ENCODE measurements at regions of chr14 and their contacts with region 1.

Region 1: DNA sequence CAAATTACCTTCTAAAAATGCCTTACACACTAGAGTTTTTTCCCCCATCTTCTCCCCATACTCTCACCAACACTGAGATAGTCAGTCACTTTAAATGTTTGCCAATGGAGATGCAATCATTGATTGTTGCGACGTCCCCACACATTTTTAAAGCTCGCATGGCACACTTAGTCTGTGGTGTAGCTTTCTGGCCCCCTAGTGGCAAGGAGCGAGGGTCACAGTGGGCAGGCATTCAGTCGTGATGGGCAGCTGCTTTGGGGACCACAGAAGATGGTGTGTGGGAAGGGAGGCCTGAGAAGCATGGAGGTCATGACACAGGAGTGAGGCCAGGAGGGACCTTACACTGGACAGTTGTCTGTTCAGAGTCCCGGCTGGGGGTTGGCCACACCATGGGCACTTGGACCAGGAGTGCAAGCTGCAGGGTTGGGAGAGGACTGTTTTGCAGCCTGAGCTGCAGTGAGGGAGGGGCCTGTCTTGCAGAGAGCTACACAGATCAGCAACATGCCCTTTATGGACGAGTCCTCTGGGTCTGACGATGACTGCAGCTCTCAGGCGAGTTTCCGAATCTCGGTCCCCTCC is 28.7 kb downstream of the PIGH start:
- DNase-seq: peak; percentile 55 to 67
- ATAC-seq: peak; percentile 92 to 98
- H3K4me3 ChIP-seq: no peak overlapping the region
- H3K27ac ChIP-seq: no peak overlapping the region
- H3K4me1 ChIP-seq: no peaks in the 10 kb centered on the region
- CTCF ChIP-seq: peak; percentile 80
- EP300 ChIP-seq: no peak
- POLR2A ChIP-seq: no peak
- RAD21 ChIP-seq: peak; percentile 74 to 86

Region 2: GRCh38 chr14:67446120-67447032 is 125.0 kb before region 1 on chr14:
- CTCF ChIA-PET with region 1: interaction called, 11 read pairs
- POLR2A ChIA-PET with region 1: no interaction called
- DNase-seq: no peak
- ATAC-seq: no peak
- H3K4me3 ChIP-seq: no peak overlapping the region
- H3K27ac ChIP-seq: no peak overlapping the region
- H3K4me1 ChIP-seq: no peaks in the 10 kb centered on the region
- CTCF ChIP-seq: no peak
- EP300 ChIP-seq: no peak
- POLR2A ChIP-seq: no peak
- RAD21 ChIP-seq: no peak

Region 3: GRCh38 chr14:67526676-67527459 is 44.5 kb before region 1 on chr14:
- CTCF ChIA-PET with region 1: interaction called, 100 read pairs
- POLR2A ChIA-PET with region 1: interaction called, 6 read pairs
- DNase-seq: peak; percentile 54 to 71
- ATAC-seq: peak; percentile 91 to 96
- H3K4me3 ChIP-seq: no peak overlapping the region
- H3K27ac ChIP-seq: no peak overlapping the region
- H3K4me1 ChIP-seq: no peaks in the 10 kb centered on the region
- CTCF ChIP-seq: peak; percentile 95
- EP300 ChIP-seq: no peak
- POLR2A ChIP-seq: no peak
- RAD21 ChIP-seq: peak; percentile 79 to 84

Region 4: GRCh38 chr14:67541448-67542387 is 29.6 kb before region 1 on chr14:
- CTCF ChIA-PET with region 1: interaction called, 68 read pairs
- POLR2A ChIA-PET with region 1: no interaction called
- DNase-seq: no peak
- ATAC-seq: no peak
- H3K4me3 ChIP-seq: no peak overlapping the region
- H3K27ac ChIP-seq: no peak overlapping the region
- H3K4me1 ChIP-seq: no peaks in the 10 kb centered on the region
- CTCF ChIP-seq: no peak
- EP300 ChIP-seq: no peak
- POLR2A ChIP-seq: no peak
- RAD21 ChIP-seq: no peak

Region 5: DNA sequence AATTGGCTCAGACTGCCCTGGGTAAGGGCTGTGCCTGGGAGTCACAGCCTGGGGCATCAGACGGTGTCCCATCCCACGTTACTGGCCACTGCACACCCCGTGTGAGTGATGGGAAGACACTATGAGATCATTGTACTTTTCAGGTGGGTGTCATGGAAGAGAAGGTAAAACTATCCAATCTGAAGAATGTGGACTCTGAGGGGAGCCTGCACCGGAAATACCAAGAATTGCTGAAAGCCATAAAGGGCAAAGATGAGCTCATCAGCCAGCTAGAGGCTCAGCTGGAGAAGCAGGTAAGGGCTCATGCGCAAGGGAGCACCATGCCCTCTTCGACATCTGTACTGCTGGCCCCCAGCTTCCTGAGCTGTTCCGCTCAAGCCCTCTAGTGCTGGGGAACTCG is 14.2 kb before region 1 on chr14:
- CTCF ChIA-PET with region 1: interaction called, 97 read pairs
- POLR2A ChIA-PET with region 1: no interaction called
- DNase-seq: peak in 1 of 2 experiments; percentile 11
- ATAC-seq: peak; percentile 39 to 57; a peak in 4 of 6 replicates
- H3K4me3 ChIP-seq: no peak overlapping the region
- H3K27ac ChIP-seq: no peak overlapping the region; a peak in 1 of 6 replicates
- H3K4me1 ChIP-seq: peaks cover 9% of the 10 kb centered on the region; the same call in 1 of the 3 replicates
- CTCF ChIP-seq: no peak
- EP300 ChIP-seq: no peak
- POLR2A ChIP-seq: no peak
- RAD21 ChIP-seq: no peak

Region 6: DNA sequence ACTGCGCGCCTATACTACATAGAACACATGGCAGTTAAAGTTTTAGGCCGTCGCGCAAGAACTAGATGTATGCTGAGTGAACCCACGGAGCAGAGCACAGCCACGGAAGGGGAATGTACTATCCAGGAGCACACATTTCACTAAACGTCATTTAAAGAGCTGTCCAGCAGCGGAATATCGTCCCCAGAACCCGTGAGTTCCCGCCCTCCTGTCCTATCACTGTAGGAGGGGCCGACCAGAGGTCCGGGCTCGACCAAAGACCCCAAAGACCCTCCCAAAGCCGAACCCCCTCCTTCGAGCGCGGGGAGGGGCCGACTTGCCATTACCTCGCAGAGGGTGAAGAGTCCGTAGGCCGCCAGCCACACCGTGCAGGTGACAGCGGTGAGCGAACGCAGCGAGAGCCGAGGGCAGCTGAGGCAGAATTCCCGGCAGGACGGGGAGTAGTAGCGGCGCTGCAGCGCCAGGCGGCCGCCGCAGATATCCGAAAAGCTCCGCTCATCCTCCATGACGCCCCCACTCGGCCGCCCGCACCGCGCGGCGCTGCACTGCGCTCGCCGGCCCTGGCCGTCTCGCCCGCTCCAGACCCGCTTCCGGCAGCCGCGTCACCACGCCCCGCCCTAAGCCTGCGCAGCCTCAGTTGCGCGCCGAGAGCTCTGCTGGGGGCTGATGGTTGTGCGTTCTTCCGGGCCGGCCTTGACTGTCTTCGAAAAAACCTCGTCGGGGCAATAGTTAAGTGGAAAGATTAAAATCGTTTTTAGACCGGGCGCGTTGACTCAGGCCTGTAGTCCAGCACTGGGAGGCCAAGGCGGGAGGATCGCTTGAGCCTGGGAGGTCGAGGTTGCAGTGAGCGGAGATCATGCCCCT is 28.6 kb after region 1 on chr14 and contains the start of gene PIGH:
- CTCF ChIA-PET with region 1: interaction called, 10 read pairs
- POLR2A ChIA-PET with region 1: interaction called, 3 read pairs
- DNase-seq: peak; percentile 87 to 91
- ATAC-seq: peak; percentile 98 to 99
- H3K4me3 ChIP-seq: peak within 1 kb of the TSS; percentile 86
- H3K27ac ChIP-seq: peak within 1 kb of the TSS; percentile 86 to 89
- H3K4me1 ChIP-seq: peaks cover 11% of the 10 kb centered on the region; the same call in 2 of the 3 replicates
- CTCF ChIP-seq: peak; percentile 56
- EP300 ChIP-seq: no peak
- POLR2A ChIP-seq: peak; percentile 71
- RAD21 ChIP-seq: no peak; a peak in 1 of 5 replicates
- polyA plus RNA-seq, gene PIGH: 37.2 and 46.2 TPM in 2 replicates

Region 7: GRCh38 chr14:67977434-67978034 is 406.2 kb after region 1 on chr14:
- CTCF ChIA-PET with region 1: no interaction called
- POLR2A ChIA-PET with region 1: no interaction called
- DNase-seq: no peak
- ATAC-seq: no peak
- H3K4me3 ChIP-seq: no peak overlapping the region
- H3K27ac ChIP-seq: 0 out of 6 replicates have a peak overlapping the region, but pooled peaks of 1 of the 2 experiments have one; percentile 8
- H3K4me1 ChIP-seq: peaks cover 18% of the 10 kb centered on the region; the same call in 2 of the 3 replicates
- CTCF ChIP-seq: no peak
- EP300 ChIP-seq: no peak
- POLR2A ChIP-seq: no peak
- RAD21 ChIP-seq: no peak